CD8-positive, alpha-beta memory T cell (primary cell): ENCODE measurements at regions of chr11 and their contacts with region 1.

Region 1: GRCh38 chr11:62726915-62727763 is at the start of gene HNRNPUL2:
- DNase-seq: peak; percentile 98 to 99 (median 99)
- H3K4me3 ChIP-seq: peak within 1 kb of the TSS; percentile 99
- H3K4me3 Mint-ChIP-seq: peak within 1 kb of the TSS; percentile 92 to 99 (median 98)
- H3K27ac ChIP-seq: peak within 1 kb of the TSS; percentile 90
- H3K27ac Mint-ChIP-seq: peak within 1 kb of the TSS; percentile 95 to 99 (median 98)
- H3K4me1 ChIP-seq: peaks cover 43% of the 10 kb centered on the region
- H3K4me1 Mint-ChIP-seq: peaks cover 55 to 64% (median 63%) of the 10 kb centered on the region in 3 donors
- H3K27me3 ChIP-seq: no peaks in the 10 kb centered on the region
- H3K27me3 Mint-ChIP-seq: peaks cover 0 to 3% of the 10 kb centered on the region in 2 donors
- total RNA-seq, gene HNRNPUL2: 58.7 to 64.3 TPM

Region 2: GRCh38 chr11:62645956-62646824 is 80.9 kb before region 1 on chr11 and contains the start of gene GANAB:
- CTCF ChIA-PET with region 1: no interaction called
- POLR2A ChIA-PET with region 1: interaction called, 16 read pairs
- DNase-seq: peak; percentile 96 to 99 (median 98)
- H3K4me3 ChIP-seq: peak within 1 kb of the TSS; percentile 75
- H3K4me3 Mint-ChIP-seq: peak within 1 kb of the TSS; percentile 89 to 97 (median 96)
- H3K27ac ChIP-seq: peak within 1 kb of the TSS; percentile 77
- H3K27ac Mint-ChIP-seq: peak within 1 kb of the TSS; percentile 88 to 99 (median 98)
- H3K4me1 ChIP-seq: peaks cover 24% of the 10 kb centered on the region
- H3K4me1 Mint-ChIP-seq: peaks cover 19 to 40% (median 25%) of the 10 kb centered on the region in 3 donors
- H3K27me3 ChIP-seq: no peaks in the 10 kb centered on the region
- H3K27me3 Mint-ChIP-seq: no peaks in the 10 kb centered on the region
- total RNA-seq, gene GANAB: 213 to 219 TPM

Region 3: DNA sequence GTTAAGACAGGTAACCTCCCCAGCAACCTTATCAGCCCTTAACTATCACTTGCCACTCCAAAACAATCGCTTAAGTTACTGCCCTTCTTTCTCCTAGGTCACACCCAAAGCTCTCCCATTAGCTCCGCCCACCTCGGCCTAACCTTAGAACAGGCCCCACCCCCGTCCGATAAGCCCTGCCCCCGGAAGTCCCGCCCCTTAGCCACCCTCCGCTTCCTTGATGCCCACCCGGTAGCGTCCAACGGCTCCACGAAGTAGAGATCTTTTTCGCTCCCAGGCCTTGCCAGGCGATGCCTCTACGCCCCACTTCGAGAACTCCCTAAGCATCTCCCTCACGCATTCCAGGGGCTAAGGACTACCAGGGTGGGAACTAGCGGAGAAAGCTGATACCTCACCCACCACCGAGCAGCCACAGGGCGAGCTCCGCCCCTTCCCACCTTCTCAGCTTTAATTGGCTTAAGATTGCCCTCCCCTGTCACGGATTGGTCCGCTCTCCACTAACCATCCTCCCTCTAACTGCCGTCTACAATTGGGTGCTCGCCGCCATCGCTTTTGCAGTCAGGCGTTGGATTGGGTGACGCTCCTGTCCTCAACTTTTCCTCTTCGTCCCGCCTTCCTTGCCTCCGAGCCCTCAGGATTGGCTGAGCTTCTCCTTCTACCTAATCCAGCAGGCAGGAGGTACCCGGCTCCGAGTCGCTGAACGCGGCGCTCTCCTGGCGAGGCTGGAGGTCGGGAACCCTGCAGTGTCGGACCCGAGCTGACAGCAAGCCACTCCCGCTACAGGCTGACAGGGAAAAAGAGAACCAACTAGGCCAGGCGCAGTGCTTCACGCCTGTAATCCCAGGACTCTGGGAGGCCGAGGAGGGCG is 26.8 kb after region 1 on chr11 and contains the start of gene ZBTB3:
- CTCF ChIA-PET with region 1: interaction called, 9 read pairs
- POLR2A ChIA-PET with region 1: interaction called, 70 read pairs
- DNase-seq: peak; percentile 95 to 99 (median 98)
- H3K4me3 ChIP-seq: peak within 1 kb of the TSS; percentile 99
- H3K4me3 Mint-ChIP-seq: peak within 1 kb of the TSS; percentile 91 to 100 (median 99)
- H3K27ac ChIP-seq: peak within 1 kb of the TSS; percentile 91
- H3K27ac Mint-ChIP-seq: peak within 1 kb of the TSS; percentile 83 to 99 (median 98)
- H3K4me1 ChIP-seq: peaks cover 22% of the 10 kb centered on the region
- H3K4me1 Mint-ChIP-seq: peaks cover 24 to 40% (median 33%) of the 10 kb centered on the region in 3 donors
- H3K27me3 ChIP-seq: no peaks in the 10 kb centered on the region
- H3K27me3 Mint-ChIP-seq: no peaks in the 10 kb centered on the region
- total RNA-seq, gene ZBTB3: 9.4 to 11.6 TPM

Region 4: DNA sequence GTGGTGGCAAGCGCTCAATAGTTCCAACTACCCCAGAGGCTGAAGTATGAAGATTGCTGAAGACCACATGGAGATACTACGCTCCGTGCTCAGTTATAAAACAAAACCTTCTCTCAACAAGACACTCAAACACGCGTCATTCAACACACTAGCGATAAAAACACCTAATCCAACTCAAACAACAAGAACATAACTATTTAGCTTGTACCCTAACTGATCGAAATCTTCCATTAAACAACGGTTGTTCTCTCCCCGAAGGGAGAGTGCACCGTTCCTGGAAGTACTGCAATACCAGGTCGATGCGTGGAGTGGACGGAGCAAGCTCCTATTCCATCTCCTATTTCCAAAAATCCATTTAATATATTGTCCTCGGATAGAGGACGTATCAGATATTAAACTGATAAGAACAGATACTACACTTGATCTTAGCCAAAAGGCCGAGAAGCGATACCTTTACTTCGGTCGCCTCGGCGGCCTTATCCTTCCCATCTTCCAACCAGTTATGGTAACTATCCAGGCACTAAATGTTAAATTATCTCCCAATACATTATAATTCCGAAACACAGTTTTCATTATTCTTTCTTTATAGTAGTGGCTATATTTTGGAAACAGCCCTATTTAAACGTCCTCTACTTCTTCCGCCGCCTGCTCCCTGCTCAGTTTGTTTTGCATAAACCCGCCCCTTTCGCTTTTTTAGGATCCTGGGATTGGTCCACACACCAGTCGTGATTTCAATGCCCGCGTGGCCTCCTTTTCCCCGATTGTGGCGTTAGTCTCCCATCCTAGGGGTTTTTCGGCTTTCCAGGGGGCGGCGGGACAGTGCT is 114.4 kb after region 1 on chr11:
- CTCF ChIA-PET with region 1: no interaction called
- POLR2A ChIA-PET with region 1: interaction called, 39 read pairs
- DNase-seq: peak; percentile 69 to 90 (median 88)
- H3K4me3 ChIP-seq: peak overlapping the region; percentile 67
- H3K4me3 Mint-ChIP-seq: no peak overlapping the region
- H3K27ac ChIP-seq: peak overlapping the region; percentile 98
- H3K27ac Mint-ChIP-seq: no peak overlapping the region
- H3K4me1 ChIP-seq: peaks cover 23% of the 10 kb centered on the region
- H3K4me1 Mint-ChIP-seq: peaks cover 22 to 28% (median 27%) of the 10 kb centered on the region in 3 donors
- H3K27me3 ChIP-seq: no peaks in the 10 kb centered on the region
- H3K27me3 Mint-ChIP-seq: peaks cover 0 to 1% of the 10 kb centered on the region in 2 donors

Region 5: GRCh38 chr11:62880803-62881578 is 153.9 kb after region 1 on chr11 and contains the start of gene SLC3A2:
- CTCF ChIA-PET with region 1: interaction called, 6 read pairs
- POLR2A ChIA-PET with region 1: interaction called, 25 read pairs
- DNase-seq: peak; percentile 82 to 89 (median 85)
- H3K4me3 ChIP-seq: peak within 1 kb of the TSS; percentile 99
- H3K4me3 Mint-ChIP-seq: peak within 1 kb of the TSS; percentile 99 to 100 (median 100)
- H3K27ac ChIP-seq: peak within 1 kb of the TSS; percentile 99
- H3K27ac Mint-ChIP-seq: peak within 1 kb of the TSS; percentile 96 to 100 (median 99)
- H3K4me1 ChIP-seq: peaks cover 39% of the 10 kb centered on the region
- H3K4me1 Mint-ChIP-seq: peaks cover 51 to 54% (median 54%) of the 10 kb centered on the region in 3 donors
- H3K27me3 ChIP-seq: no peaks in the 10 kb centered on the region
- H3K27me3 Mint-ChIP-seq: no peaks in the 10 kb centered on the region
- total RNA-seq, gene SLC3A2: 426 to 430 TPM

Region 6: GRCh38 chr11:62892077-62892922 is 165.2 kb after region 1 on chr11:
- CTCF ChIA-PET with region 1: no interaction called
- POLR2A ChIA-PET with region 1: no interaction called
- DNase-seq: peak in 1 of 5 donors; percentile 14
- H3K4me3 ChIP-seq: no peak overlapping the region
- H3K4me3 Mint-ChIP-seq: no peak overlapping the region
- H3K27ac ChIP-seq: no peak overlapping the region
- H3K27ac Mint-ChIP-seq: peak overlapping the region in 1 of 8 donors; percentile 7
- H3K4me1 ChIP-seq: no peaks in the 10 kb centered on the region
- H3K4me1 Mint-ChIP-seq: no peaks in the 10 kb centered on the region
- H3K27me3 ChIP-seq: no peaks in the 10 kb centered on the region
- H3K27me3 Mint-ChIP-seq: peaks cover 6% of the 10 kb centered on the region in 2 donors